Heart left ventricle (tissue), 16 donors: ENCODE measurements at regions of chr1 and their contacts with region 1.

Region 1: GRCh38 chr1:223748773-223749733 is 36.7 kb downstream of the CAPN2 start:
- DNase-seq: peak; percentile 60 to 86 (median 69)
- ATAC-seq: peak; percentile 51 to 90 (median 84)
- H3K4me3 ChIP-seq: peak overlapping the region in 11 of 12 donors; percentile 29 to 71 (median 54)
- H3K27ac ChIP-seq: peak overlapping the region in 11 of 12 donors; percentile 45 to 84 (median 70)
- H3K4me1 ChIP-seq: peaks cover 3 to 30% (median 20%) of the 10 kb centered on the region in 12 donors
- H3K27me3 ChIP-seq: no peaks in the 10 kb centered on the region
- CTCF ChIP-seq: peak; percentile 93 to 99 (median 96)
- POLR2A ChIP-seq: no peak

Region 2: GRCh38 chr1:223700942-223701637 is 48.0 kb before region 1 on chr1:
- intact Hi-C with region 1: loop called in 7 of 10 experiments (anchors 1 to 5 kb)
- DNase-seq: peak in 1 of 5 donors; percentile 56
- ATAC-seq: peak in 3 of 4 donors; percentile 16 to 58 (median 51)
- H3K4me3 ChIP-seq: no peak overlapping the region
- H3K27ac ChIP-seq: peak overlapping the region in 7 of 12 donors; percentile 16 to 49 (median 38)
- H3K4me1 ChIP-seq: peaks cover 0 to 46% (median 19%) of the 10 kb centered on the region in 12 donors
- H3K27me3 ChIP-seq: no peaks in the 10 kb centered on the region
- CTCF ChIP-seq: no peak
- POLR2A ChIP-seq: no peak